ENCODE measurements at regions of chr4 and their contacts with region 1.

Region 1: GRCh38 chr4:88659055-88659889 is 38.4 kb downstream of the NAP1L5 start:
- DNase-seq: peak; percentile 26
- H3K4me3 ChIP-seq: no peak overlapping the region
- H3K27ac ChIP-seq: no peak overlapping the region
- H3K27me3 ChIP-seq: no peaks in the 10 kb centered on the region
- CTCF ChIP-seq: peak; percentile 76

Region 2: GRCh38 chr4:88369936-88370335 is 289.3 kb before region 1 on chr4:
- CTCF ChIA-PET with region 1: no interaction called
- POLR2A ChIA-PET with region 1: no interaction called
- DNase-seq: no peak
- H3K4me3 ChIP-seq: no peak overlapping the region
- H3K27ac ChIP-seq: no peak overlapping the region
- H3K27me3 ChIP-seq: peaks cover 5% of the 10 kb centered on the region
- CTCF ChIP-seq: no peak

Region 3: DNA sequence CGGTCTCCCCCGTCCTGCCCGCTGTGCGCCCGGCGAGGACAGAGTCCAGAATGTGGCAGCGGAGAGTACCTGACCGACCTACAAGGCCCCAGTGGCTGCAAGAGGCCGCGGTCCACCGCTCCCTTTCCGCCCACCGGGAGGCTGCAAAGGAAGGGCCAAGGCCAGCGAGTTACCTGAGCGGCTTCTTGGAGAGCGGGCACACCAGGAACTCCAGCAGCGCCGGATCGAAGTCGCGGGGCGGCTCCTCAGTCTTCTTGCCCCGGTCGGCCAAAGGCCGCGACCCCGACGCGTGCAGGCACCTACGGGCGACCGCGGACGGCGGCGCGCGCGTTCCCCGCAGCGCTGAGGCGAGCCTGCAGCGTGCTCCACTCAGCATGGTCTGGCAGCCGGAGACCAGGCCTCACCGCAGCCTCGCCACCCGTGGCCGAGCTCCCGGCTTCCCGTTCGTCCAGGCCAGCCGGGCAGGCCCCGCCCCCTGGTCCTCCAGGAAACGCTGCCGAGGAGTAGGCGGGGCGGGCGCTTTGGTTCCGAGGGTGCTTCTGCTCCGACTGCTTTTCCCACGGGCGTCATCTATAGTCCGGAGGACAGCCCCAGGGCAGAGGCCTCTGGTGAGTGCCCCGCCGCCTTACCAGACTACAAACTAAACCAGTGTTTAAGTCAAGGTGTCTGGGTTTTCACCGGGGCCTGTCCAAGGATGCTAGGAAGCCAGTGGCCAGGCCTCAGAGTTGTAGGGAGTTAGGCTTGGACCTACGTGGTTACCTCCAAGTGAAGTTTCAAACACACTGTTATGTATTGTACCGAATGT is 135.7 kb before region 1 on chr4 and contains the start of gene PYURF:
- CTCF ChIA-PET with region 1: interaction called, 15 read pairs
- POLR2A ChIA-PET with region 1: no interaction called
- DNase-seq: peak; percentile 73
- H3K4me3 ChIP-seq: peak within 1 kb of the TSS; percentile 92
- H3K27ac ChIP-seq: peak within 1 kb of the TSS; percentile 66
- H3K27me3 ChIP-seq: no peaks in the 10 kb centered on the region
- CTCF ChIP-seq: no peak
- polyA plus RNA-seq, gene PYURF: 50.5 and 65.7 TPM in 2 replicates

Region 4: DNA sequence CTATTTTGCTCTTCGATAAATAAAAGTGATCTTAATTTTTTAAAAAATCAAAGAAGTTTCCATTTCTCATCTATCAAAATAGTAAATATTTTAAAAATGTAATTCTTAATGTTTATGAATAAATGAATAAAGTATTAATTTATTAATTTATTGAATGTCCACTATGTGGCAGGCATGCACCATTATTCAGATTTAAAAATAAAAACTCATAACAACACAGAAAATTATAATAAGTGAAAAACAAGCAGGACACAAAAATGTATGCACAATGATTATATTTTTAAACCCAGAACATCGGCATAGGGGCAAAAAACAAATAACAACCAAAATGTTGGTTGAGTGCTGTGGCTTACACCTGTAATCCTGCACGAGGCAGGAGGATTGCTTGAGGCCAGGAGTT is 130.4 kb before region 1 on chr4:
- CTCF ChIA-PET with region 1: interaction called, 15 read pairs
- POLR2A ChIA-PET with region 1: no interaction called
- DNase-seq: no peak
- H3K4me3 ChIP-seq: no peak overlapping the region
- H3K27ac ChIP-seq: no peak overlapping the region
- H3K27me3 ChIP-seq: no peaks in the 10 kb centered on the region
- CTCF ChIP-seq: peak; percentile 21; the same call in 1 of the 2 replicates

Region 5: GRCh38 chr4:88533937-88534750 is 125.1 kb before region 1 on chr4:
- CTCF ChIA-PET with region 1: interaction called, 20 read pairs
- POLR2A ChIA-PET with region 1: no interaction called
- DNase-seq: peak; percentile 52
- H3K4me3 ChIP-seq: peak overlapping the region; percentile 35
- H3K27ac ChIP-seq: peak overlapping the region; percentile 92
- H3K27me3 ChIP-seq: no peaks in the 10 kb centered on the region
- CTCF ChIP-seq: no peak

Region 6: DNA sequence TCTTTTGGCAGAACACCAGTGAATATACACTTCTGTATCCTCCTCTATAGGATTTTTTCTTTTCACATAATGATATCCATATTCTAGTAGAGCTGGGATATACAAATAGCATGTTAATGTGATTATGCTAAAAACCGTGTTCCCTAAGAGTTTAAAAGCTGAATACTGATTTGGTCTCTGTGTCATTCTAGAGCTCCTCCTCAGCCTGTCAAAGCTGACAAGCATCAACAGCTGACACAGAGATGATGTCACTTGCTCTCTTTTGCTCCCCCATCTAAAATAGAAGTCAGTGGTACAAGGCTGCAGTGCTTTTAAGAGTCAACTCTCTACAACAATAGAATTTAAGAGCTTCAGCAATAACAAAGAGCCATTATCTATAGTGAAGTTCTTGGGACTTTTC is 84.1 kb before region 1 on chr4:
- CTCF ChIA-PET with region 1: no interaction called
- POLR2A ChIA-PET with region 1: no interaction called
- DNase-seq: no peak
- H3K4me3 ChIP-seq: no peak overlapping the region
- H3K27ac ChIP-seq: no peak overlapping the region
- H3K27me3 ChIP-seq: no peaks in the 10 kb centered on the region
- CTCF ChIP-seq: no peak

Region 7: GRCh38 chr4:88672987-88673386 is 13.7 kb after region 1 on chr4:
- CTCF ChIA-PET with region 1: interaction called, 45 read pairs
- POLR2A ChIA-PET with region 1: no interaction called
- DNase-seq: no peak
- H3K4me3 ChIP-seq: no peak overlapping the region
- H3K27ac ChIP-seq: no peak overlapping the region
- H3K27me3 ChIP-seq: no peaks in the 10 kb centered on the region
- CTCF ChIP-seq: peak; percentile 76